ENCODE measurements at regions of chr7 and their contacts with region 1.

Region 1: DNA sequence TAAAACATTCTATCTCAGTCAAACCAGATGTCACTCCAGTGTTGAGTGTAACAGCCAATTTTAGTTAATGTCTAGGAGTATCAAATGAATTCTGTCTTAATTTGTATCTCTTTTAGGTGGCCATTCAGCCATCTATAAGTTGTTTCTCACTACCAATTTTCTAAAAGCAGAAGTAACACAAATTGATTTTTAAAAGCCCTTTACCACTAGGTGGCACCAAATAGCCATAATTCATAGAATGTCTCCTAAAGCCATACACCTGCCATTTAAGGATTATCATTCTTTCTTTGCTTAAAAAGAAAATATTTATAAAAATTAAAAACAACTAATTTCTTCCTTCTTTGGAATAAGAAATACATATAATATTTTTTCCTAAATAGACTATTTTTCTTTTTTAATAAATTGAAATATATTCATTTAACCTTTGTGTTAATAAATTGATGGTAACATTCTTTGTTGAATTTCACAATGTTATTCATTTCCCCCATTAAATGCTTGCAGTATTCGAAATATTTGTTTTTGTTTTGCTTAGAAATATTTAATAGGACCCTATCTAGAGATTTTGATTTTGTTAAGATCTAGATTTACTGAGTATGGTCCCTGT is 107.8 kb upstream of the PPP1R3A start:
- DNase-seq: no peak
- ATAC-seq: peak; percentile 56
- H3K4me3 ChIP-seq: no peak overlapping the region
- H3K27ac ChIP-seq: no peak overlapping the region
- H3K4me1 ChIP-seq: no peaks in the 10 kb centered on the region
- H3K27me3 ChIP-seq: no peaks in the 10 kb centered on the region
- CTCF ChIP-seq: peak; percentile 74

Region 2: DNA sequence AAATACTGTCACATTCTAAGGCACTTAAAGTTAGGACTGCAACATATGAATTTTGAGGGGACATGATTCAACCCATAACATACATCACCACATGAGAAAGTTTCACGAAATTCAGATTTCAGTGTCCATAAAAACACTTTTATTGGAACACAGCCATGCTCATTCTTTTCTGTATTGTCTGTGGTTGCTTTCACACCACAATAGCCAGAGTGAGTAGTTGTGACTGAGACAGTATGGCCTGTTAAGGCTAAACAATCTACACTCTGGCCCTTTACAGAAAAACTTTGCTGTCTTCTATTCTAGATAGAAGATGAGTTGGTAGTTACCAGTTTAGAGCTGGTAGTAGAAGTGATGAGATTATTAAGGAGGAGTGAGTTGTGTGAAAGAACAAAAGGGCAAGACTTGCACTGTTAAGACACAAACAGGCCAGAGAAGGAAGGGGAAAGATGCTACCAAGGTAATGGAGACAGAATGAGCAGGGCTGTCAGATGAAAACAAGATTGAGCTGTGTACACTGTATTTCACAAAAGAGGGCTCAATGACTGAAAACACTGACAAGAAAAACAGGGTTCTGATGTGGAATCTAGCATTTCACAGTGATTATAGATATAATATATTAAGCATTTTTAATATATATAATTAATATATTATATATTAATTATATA is 216.4 kb before region 1 on chr7:
- intact Hi-C with region 1: no loop called
- DNase-seq: no peak
- ATAC-seq: no peak
- H3K4me3 ChIP-seq: no peak overlapping the region
- H3K27ac ChIP-seq: no peak overlapping the region
- H3K4me1 ChIP-seq: no peaks in the 10 kb centered on the region
- H3K27me3 ChIP-seq: no peaks in the 10 kb centered on the region
- CTCF ChIP-seq: no peak

Region 3: GRCh38 chr7:114196517-114196916 is 169.9 kb after region 1 on chr7:
- intact Hi-C with region 1: no loop called
- DNase-seq: no peak
- ATAC-seq: no peak
- H3K4me3 ChIP-seq: no peak overlapping the region
- H3K27ac ChIP-seq: no peak overlapping the region
- H3K4me1 ChIP-seq: no peaks in the 10 kb centered on the region
- H3K27me3 ChIP-seq: no peaks in the 10 kb centered on the region
- CTCF ChIP-seq: no peak

Region 4: GRCh38 chr7:115844857-115845256 is 1818.3 kb after region 1 on chr7:
- intact Hi-C with region 1: loop called (anchors 10 kb)
- DNase-seq: no peak
- ATAC-seq: no peak
- H3K4me3 ChIP-seq: no peak overlapping the region
- H3K27ac ChIP-seq: no peak overlapping the region
- H3K4me1 ChIP-seq: no peaks in the 10 kb centered on the region
- H3K27me3 ChIP-seq: no peaks in the 10 kb centered on the region
- CTCF ChIP-seq: no peak

Measured in upper lobe of right lung (tissue), 1 donor.